Cardiac septum (tissue), 1 donor: ENCODE measurements at regions of chr2 and their contacts with region 1.

Region 1: DNA sequence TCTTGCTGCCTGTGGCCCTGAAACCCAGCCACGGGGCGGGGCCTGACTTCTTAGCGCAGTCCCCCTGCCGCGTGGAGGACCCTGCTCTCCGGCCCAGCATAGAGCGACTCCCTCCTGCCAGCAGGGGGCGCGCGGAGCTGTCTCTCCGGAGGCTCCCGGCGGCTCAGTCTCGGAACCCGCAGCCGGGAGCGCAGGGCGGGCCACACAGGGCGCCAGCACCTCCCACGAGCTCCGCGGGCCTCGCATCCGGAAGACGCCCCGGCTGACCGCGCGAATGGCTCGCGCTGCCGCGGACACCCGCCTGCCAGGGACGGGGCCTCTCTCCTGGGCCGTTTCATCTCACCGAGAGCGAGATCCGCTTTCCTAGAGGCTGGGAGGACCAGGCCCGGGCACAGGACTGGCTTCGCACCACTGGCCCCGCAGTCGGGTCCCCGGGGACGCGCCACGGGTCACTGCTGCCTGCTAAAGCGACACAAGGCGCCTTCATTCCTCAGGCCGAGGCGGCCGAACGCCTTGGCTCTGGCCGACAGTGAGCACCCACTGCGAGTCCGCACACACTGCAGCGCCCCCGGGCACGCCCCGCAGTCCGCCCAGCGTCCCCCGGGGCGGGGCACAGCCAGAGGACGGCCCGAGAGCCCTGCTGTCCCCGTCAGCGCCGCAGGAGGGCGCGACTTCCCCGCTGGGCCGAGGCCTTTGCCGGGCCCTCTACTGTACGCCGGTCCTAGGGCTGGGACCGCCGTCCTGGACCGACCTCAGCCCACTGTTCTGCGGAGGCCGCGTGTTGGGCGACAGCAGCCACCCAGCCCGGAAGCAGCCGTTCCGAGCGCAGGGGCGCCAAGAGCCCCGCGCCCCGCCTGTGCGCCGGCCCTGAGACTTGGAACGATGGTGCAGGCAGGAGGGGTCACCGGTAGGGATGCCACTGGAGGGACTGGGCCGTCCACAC is 39.0 kb upstream of the ARHGEF4 start:
- DNase-seq: peak; percentile 92

Region 2: DNA sequence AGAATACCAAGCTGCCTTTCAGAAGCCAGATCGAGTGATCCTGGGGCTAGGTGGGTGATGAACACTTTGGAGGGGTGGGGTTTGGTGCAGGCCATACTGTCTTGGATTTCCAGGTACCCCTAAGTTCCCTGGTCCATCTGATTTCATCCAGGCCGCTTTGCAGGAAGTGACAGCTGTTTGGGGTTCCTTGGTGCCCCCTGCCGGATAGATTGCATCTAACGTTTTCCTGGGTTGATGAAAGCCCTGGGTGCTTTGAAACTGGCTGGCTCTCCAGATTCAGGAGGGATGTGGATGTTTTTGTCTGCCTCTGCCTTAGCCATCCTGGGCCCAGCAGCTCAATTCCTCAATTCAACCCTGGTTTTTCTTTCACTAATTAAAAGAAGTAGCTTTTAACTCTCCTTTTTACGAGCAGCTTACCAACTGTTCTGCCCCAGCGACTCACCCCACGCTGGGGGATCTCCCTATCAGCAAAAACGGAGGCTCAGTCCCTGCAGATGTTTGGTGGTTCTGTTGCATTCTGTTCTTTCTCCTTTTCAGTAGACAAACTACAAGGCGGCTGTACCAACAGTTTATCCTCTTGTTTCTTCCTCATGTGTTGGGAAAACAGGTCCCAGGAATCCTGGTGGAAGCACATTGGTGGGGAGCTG is 76.1 kb after region 1 on chr2:
- intact Hi-C with region 1: loop called (anchors 2 kb)
- DNase-seq: peak; percentile 77

Region 3: DNA sequence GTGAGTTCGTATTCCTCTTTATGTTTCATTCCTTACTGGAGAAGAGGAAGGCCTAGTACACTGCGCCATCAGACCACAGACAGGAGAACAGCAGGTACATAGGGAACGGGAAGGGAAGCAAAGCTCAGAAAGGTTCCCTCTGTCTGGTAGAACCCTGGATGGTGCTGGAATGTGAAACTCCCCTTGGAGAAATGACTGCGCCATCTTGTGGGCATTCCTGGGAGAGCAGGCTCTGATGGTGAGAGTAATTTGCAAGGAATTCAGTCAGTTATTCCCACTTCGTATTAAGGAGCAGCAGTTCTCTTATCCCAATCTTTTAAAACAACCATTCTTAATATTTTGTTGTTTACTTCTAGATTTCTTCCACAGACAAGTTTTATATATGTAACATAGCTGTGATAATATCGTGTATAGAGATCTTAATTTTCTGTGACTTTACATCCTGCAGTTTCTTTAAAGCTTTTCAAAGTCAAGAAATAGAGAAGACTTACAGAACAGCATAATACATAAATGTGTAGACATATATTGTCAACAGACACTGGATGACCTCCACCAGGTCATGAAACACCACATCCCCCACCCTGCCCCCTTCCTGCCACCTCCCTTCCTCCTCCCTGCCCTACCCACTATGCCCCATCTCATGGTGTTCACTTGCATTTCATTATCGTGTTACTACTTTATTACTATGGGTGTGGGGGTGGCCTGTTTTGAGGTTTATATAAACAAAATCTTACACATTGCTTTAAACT is 122.8 kb after region 1 on chr2:
- intact Hi-C with region 1: loop called (anchors 1 kb)
- DNase-seq: no peak

Region 4: DNA sequence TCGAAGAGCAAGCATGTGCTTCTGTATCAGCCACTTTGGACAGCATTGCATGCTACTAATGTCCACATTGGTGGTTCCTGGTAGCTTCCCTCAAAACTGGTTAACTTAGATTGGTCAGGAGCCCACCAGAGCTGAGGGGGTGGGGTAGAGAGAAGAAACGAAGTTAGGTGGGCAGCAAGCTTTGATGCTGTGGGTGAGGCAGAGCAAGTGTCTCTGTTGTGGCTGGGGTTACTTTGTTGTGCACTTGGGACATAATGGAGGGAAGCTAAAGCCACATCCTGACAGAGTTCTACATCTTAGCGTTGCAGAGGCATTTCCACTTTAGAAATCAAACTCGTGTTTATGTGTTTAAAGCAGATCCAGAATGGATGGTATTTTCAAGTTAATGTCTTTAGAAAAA is 212.8 kb after region 1 on chr2:
- intact Hi-C with region 1: no loop called
- DNase-seq: no peak